Mammary epithelial cell (primary cell): ENCODE measurements at regions of chr18 and their contacts with region 1.

Region 1: GRCh38 chr18:52220062-52220591 is 119.9 kb upstream of the DCC start:
- DNase-seq: no peak
- H3K4me3 ChIP-seq: no peak overlapping the region
- H3K27ac ChIP-seq: no peak overlapping the region
- H3K4me1 ChIP-seq: peaks cover 29% of the 10 kb centered on the region
- H3K27me3 ChIP-seq: no peaks in the 10 kb centered on the region
- CTCF ChIP-seq: no peak

Region 2: GRCh38 chr18:51537487-51537886 is 682.6 kb before region 1 on chr18:
- CTCF ChIA-PET with region 1: no interaction called
- dilution Hi-C with region 1: no loop called
- in situ Hi-C with region 1: no loop called
- intact Hi-C with region 1: no loop called
- DNase-seq: peak; percentile 66
- H3K4me3 ChIP-seq: no peak overlapping the region
- H3K27ac ChIP-seq: no peak overlapping the region
- H3K4me1 ChIP-seq: no peaks in the 10 kb centered on the region
- H3K27me3 ChIP-seq: no peaks in the 10 kb centered on the region
- CTCF ChIP-seq: peak; percentile 46 to 61

Region 3: DNA sequence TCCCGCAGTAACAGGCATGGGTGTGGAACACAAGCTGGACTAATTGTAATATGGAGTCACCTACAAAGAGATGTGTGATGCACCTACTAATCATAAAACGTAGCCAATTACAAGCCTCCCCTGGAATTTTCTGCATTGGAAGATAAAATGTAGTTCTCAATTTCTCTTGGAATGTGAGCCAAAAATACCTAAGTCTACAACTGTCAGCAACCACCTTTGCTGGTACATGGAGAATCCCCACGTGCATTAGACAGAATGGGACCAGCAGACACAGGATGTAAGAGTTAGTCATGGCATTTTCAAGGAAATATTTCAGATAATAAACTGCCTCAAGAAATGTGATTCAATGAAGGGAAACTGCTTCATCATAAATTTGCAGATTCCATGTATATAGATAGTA is 34.2 kb after region 1 on chr18:
- CTCF ChIA-PET with region 1: no interaction called
- dilution Hi-C with region 1: loop called (anchors 5 kb)
- in situ Hi-C with region 1: no loop called
- intact Hi-C with region 1: no loop called
- DNase-seq: peak; percentile 71
- H3K4me3 ChIP-seq: no peak overlapping the region
- H3K27ac ChIP-seq: peak overlapping the region; percentile 37
- H3K4me1 ChIP-seq: peaks cover 15% of the 10 kb centered on the region
- H3K27me3 ChIP-seq: no peaks in the 10 kb centered on the region
- CTCF ChIP-seq: no peak